Naive thymus-derived CD4-positive, alpha-beta T cell (primary cell): ENCODE measurements at regions of chr19 and their contacts with region 1.

Region 1: DNA sequence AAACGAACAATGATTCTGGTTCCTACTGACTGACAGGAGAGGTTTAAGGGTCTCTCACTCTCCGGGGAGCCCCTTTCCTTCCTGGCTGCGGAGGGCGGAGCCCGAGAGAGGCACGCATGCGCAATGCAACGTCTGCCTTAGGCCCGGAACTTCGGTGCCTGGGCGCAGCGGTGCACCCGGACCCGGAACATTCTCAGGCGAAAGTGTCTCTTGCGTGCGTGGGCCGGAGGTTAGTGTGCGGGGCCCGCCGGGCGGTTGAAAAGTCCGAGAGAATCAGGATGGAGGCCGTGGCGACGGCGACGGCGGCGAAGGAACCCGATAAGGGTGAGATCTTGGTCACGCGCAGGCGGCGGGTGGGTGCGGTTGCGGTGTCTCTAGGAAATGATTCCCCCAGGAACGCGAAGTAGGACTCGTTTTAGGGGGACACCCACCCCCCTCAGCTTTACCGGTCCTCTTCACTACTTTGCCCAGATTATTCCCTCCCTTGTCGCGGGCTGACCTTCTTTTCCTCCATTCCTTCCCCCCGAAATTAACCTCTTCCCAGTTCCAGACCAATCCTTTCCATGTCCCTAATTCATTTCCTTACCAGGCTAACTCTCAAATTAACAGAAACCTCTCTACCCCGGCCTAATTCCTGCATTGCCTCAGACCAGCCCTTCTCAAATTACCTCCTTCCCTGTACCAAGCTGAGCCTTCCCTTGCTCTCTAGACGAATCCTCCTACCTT is at the start of gene CCDC97:
- DNase-seq: peak; percentile 85 to 94 (median 91)
- ATAC-seq: peak; percentile 72
- H3K4me3 ChIP-seq: peak within 1 kb of the TSS; percentile 72
- H3K4me3 Mint-ChIP-seq: peak within 1 kb of the TSS; percentile 93 to 100 (median 96)
- H3K27ac ChIP-seq: peak within 1 kb of the TSS; percentile 87
- H3K27ac Mint-ChIP-seq: peak within 1 kb of the TSS; percentile 94 to 99 (median 98)
- H3K4me1 ChIP-seq: peaks cover 51 to 60% of the 10 kb centered on the region in 2 donors
- H3K4me1 Mint-ChIP-seq: peaks cover 52 to 90% (median 69%) of the 10 kb centered on the region in 7 donors
- H3K27me3 ChIP-seq: no peaks in the 10 kb centered on the region
- H3K27me3 Mint-ChIP-seq: peaks cover 0 to 3% (median 0%) of the 10 kb centered on the region in 5 donors
- total RNA-seq, gene CCDC97: 35.9 to 56.5 (median 49.1) TPM

Region 2: DNA sequence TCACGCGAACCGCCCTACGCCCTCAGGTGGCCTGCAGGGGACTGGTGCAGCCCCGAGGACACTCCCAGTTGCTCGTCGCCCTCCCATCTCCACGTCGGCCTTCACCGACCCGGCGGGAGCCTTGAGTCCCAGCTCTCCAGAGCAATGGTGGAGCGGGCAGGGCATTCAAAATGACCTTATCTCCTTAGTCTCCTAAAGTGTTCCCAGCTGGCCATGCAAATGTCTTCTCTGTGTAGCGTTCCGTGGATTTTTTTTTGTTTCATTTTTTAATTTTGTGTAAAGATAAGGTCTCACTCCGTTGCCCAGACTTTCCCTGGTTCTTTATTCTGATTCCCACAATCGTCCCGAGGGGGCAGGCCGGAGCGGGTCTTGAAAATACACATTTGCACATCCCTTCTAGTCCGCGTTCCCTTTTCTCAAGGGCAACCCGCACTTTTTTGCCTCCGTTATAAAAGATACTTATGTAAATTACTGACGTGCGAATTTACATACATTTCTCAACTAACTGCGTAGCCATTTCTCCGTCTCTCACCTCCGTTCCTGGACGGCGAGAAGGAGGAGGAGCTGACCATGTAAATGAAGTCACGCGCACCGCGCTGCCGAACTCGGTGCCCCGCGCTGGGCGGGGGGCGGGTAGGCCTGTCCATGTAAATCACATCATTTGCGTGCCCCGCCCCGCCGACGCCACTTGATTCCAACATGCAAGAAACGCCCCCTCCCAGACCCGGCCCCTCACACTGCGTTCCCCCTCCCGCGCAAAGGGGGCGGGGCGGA is 511.8 kb before region 1 on chr19:
- CTCF ChIA-PET with region 1: interaction called, 4 read pairs
- POLR2A ChIA-PET with region 1: interaction called, 3 read pairs
- intact Hi-C with region 1: loop called in 1 of 2 experiments (anchors 5 kb)
- DNase-seq: peak; percentile 48 to 100 (median 100)
- ATAC-seq: peak; percentile 92
- H3K4me3 ChIP-seq: peak overlapping the region; percentile 77
- H3K4me3 Mint-ChIP-seq: peak overlapping the region; percentile 89 to 100 (median 95)
- H3K27ac ChIP-seq: peak overlapping the region; percentile 90
- H3K27ac Mint-ChIP-seq: peak overlapping the region; percentile 96 to 100 (median 99)
- H3K4me1 ChIP-seq: peaks cover 35 to 39% of the 10 kb centered on the region in 2 donors
- H3K4me1 Mint-ChIP-seq: peaks cover 28 to 56% (median 48%) of the 10 kb centered on the region in 7 donors
- H3K27me3 ChIP-seq: no peaks in the 10 kb centered on the region
- H3K27me3 Mint-ChIP-seq: no peaks in the 10 kb centered on the region

Region 3: DNA sequence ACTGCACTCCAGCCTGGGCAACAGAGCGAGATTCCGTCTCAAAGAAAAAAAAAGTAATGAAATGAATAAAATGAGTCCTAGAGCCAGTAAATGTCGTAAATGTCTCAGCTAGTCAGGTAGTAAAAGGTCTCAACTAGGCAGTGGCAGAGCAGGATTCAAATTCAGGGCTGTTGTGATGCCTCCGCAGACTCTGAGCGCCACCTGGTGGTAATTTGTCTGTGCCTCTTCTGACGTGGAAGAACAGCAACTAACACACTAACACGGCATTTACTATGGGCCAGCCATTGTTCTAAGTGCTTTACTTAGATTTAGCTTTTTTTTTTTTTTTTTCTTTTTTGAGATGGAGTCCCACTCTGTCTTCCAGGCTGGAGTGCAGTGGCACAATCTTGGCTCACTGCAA is 165.8 kb before region 1 on chr19:
- CTCF ChIA-PET with region 1: no interaction called
- POLR2A ChIA-PET with region 1: no interaction called
- intact Hi-C with region 1: loop called in 1 of 2 experiments (anchors 1 kb)
- DNase-seq: peak; percentile 68 to 88 (median 84)
- ATAC-seq: peak; percentile 96
- H3K4me3 ChIP-seq: no peak overlapping the region
- H3K4me3 Mint-ChIP-seq: no peak overlapping the region
- H3K27ac ChIP-seq: no peak overlapping the region
- H3K27ac Mint-ChIP-seq: peak overlapping the region in 4 of 9 donors; percentile 44 to 78 (median 58)
- H3K4me1 ChIP-seq: no peaks in the 10 kb centered on the region
- H3K4me1 Mint-ChIP-seq: peaks cover 0 to 3% (median 0%) of the 10 kb centered on the region in 7 donors
- H3K27me3 ChIP-seq: no peaks in the 10 kb centered on the region
- H3K27me3 Mint-ChIP-seq: peaks cover 0 to 29% (median 15%) of the 10 kb centered on the region in 5 donors

Region 4: GRCh38 chr19:41298348-41298964 is 11.7 kb before region 1 on chr19:
- CTCF ChIA-PET with region 1: interaction called, 10 read pairs
- POLR2A ChIA-PET with region 1: interaction called, 7 read pairs
- intact Hi-C with region 1: loop called (anchors 1 kb)
- DNase-seq: no peak
- ATAC-seq: peak; percentile 63
- H3K4me3 ChIP-seq: no peak overlapping the region
- H3K4me3 Mint-ChIP-seq: peak overlapping the region in 7 of 10 donors; percentile 9 to 95 (median 38)
- H3K27ac ChIP-seq: peak overlapping the region; percentile 74
- H3K27ac Mint-ChIP-seq: peak overlapping the region; percentile 71 to 99 (median 91)
- H3K4me1 ChIP-seq: peaks cover 68 to 75% of the 10 kb centered on the region in 2 donors
- H3K4me1 Mint-ChIP-seq: peaks cover 63 to 91% (median 82%) of the 10 kb centered on the region in 7 donors
- H3K27me3 ChIP-seq: no peaks in the 10 kb centered on the region
- H3K27me3 Mint-ChIP-seq: no peaks in the 10 kb centered on the region

Region 5: DNA sequence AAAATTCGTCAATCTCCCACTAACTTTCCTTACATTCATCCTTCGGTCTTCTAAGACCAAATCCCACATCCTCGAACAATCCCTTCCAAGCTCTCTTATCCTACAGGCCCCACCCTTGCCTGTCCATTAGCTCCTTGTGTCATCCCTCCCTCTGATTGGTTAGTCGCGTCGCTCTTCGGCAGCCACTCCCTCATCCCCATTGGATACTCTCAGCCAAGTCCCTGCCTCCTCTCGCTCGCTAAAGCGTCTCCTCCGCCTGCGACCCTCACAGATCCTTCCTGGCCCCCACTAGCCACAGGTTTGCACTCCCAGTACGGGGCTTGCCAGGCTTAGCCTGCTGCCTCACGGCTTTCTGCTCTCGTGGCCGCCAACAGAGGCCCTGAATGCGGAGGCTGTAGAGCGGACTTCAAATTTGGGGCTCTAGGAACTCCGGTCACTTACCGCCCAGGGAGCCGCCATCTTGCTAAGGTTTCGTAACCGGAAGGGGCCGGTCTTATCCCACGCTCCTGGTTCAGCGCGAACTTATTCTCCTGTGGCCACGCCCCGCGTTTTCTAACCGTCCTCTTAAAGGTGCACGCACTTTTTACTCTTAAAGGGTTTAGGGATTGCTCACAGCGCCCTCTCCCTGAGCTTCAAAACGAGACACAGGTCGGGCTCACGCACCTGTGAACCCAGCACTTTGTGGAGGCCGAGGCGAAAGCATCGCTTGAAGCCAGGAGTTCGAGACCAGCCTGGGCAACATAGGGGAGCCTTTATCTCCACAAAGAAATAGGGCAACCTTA is 129.4 kb after region 1 on chr19 and contains the start of gene DMAC2:
- CTCF ChIA-PET with region 1: no interaction called
- POLR2A ChIA-PET with region 1: no interaction called
- intact Hi-C with region 1: loop called (anchors 1 to 10 kb)
- DNase-seq: peak; percentile 65 to 94 (median 88)
- ATAC-seq: peak; percentile 100
- H3K4me3 ChIP-seq: peak within 1 kb of the TSS; percentile 96
- H3K4me3 Mint-ChIP-seq: peak within 1 kb of the TSS in 2 of 10 donors; percentile 49 to 54
- H3K27ac ChIP-seq: peak within 1 kb of the TSS; percentile 85
- H3K27ac Mint-ChIP-seq: peak within 1 kb of the TSS in 5 of 9 donors; percentile 3 to 89 (median 56)
- H3K4me1 ChIP-seq: peaks cover 7 to 12% of the 10 kb centered on the region in 2 donors
- H3K4me1 Mint-ChIP-seq: peaks cover 4 to 25% (median 6%) of the 10 kb centered on the region in 7 donors
- H3K27me3 ChIP-seq: no peaks in the 10 kb centered on the region
- H3K27me3 Mint-ChIP-seq: peaks cover 0 to 2% (median 0%) of the 10 kb centered on the region in 5 donors
- total RNA-seq, gene DMAC2: 22.2 to 44.4 (median 26.2) TPM

Region 6: DNA sequence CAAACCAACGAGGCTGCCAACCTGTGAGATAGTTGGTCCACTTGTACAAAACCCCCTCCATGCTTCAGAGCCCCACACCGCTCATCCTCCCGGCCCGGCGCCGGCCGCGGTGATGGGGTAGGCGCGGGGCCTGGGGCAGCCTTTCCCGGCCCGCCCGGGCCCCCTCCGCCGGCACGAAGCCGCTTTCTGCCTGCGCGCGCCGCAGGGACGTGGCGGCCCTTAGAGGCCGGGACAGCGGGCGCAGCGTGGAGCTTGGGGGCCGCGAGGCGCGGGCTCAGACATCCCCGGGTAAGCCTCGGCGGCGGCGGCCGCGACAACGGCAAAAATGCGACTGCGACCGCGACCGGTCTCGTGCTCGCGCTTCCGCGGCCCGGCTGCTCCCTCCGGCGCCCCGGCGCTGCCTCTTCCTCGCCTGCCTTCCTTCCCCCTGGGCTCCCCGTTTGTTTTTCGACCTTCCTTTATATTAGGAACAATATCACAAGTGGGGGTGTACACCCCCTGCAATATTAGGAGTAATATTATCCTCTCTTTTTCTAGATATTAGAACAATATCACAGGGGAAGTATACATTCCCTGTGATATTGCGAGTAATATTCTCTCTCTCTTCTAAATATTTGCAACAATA is 211.8 kb after region 1 on chr19:
- CTCF ChIA-PET with region 1: no interaction called
- POLR2A ChIA-PET with region 1: no interaction called
- intact Hi-C with region 1: no loop called
- DNase-seq: peak in 8 of 9 donors; percentile 31 to 50 (median 44)
- ATAC-seq: peak; percentile 69
- H3K4me3 ChIP-seq: peak overlapping the region; percentile 63
- H3K4me3 Mint-ChIP-seq: peak overlapping the region; percentile 85 to 95 (median 91)
- H3K27ac ChIP-seq: peak overlapping the region; percentile 73
- H3K27ac Mint-ChIP-seq: peak overlapping the region; percentile 85 to 97 (median 92)
- H3K4me1 ChIP-seq: peaks cover 6% of the 10 kb centered on the region in 2 donors
- H3K4me1 Mint-ChIP-seq: peaks cover 20 to 29% (median 25%) of the 10 kb centered on the region in 7 donors
- H3K27me3 ChIP-seq: no peaks in the 10 kb centered on the region
- H3K27me3 Mint-ChIP-seq: peaks cover 0 to 49% (median 17%) of the 10 kb centered on the region in 5 donors

Region 7: DNA sequence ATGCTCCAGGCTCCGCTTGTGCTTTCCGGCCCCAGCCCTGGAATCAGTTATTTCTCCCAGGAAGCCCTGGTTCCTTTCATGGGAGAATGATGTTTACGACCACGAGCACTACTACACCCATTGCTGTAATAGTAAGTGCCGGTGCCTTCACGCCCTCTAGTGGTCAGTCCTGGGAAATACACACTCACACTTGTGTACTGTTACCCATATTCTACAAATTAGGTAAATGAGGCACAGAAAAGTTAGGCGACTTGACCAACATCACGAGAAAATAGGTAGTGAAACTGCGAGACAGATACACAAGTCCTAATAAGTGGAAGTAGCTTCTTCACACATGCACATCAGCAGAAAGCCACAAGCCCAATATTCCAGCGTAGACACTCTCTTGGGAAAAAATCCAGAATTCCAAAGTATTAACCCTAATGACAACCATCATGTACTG is 287.4 kb after region 1 on chr19:
- CTCF ChIA-PET with region 1: no interaction called
- POLR2A ChIA-PET with region 1: no interaction called
- intact Hi-C with region 1: loop called in 1 of 2 experiments (anchors 2 kb)
- DNase-seq: peak; percentile 35 to 77 (median 69)
- ATAC-seq: peak; percentile 93
- H3K4me3 ChIP-seq: no peak overlapping the region
- H3K4me3 Mint-ChIP-seq: peak overlapping the region in 3 of 10 donors; percentile 10 to 78 (median 19)
- H3K27ac ChIP-seq: no peak overlapping the region
- H3K27ac Mint-ChIP-seq: peak overlapping the region in 1 of 9 donors; percentile 17
- H3K4me1 ChIP-seq: no peaks in the 10 kb centered on the region
- H3K4me1 Mint-ChIP-seq: peaks cover 9 to 17% (median 12%) of the 10 kb centered on the region in 7 donors
- H3K27me3 ChIP-seq: no peaks in the 10 kb centered on the region
- H3K27me3 Mint-ChIP-seq: peaks cover 0 to 38% (median 9%) of the 10 kb centered on the region in 5 donors